ENCODE measurements at regions of chr1 and their contacts with region 1.

Region 1: GRCh38 chr1:12124693-12125421 is 41.9 kb upstream of the TNFRSF1B start:
- DNase-seq: peak; percentile 68 to 85 (median 72)
- H3K4me3 ChIP-seq: no peak overlapping the region
- H3K4me3 Mint-ChIP-seq: peak overlapping the region in 4 of 7 donors; percentile 27 to 50 (median 40)
- H3K27ac ChIP-seq: no peak overlapping the region
- H3K27ac Mint-ChIP-seq: peak overlapping the region in 5 of 8 donors; percentile 59 to 90 (median 81)
- H3K4me1 ChIP-seq: peaks cover 22% of the 10 kb centered on the region
- H3K4me1 Mint-ChIP-seq: peaks cover 30 to 46% (median 34%) of the 10 kb centered on the region in 3 donors
- H3K27me3 ChIP-seq: no peaks in the 10 kb centered on the region
- H3K27me3 Mint-ChIP-seq: peaks cover 0 to 2% of the 10 kb centered on the region in 2 donors

Region 2: DNA sequence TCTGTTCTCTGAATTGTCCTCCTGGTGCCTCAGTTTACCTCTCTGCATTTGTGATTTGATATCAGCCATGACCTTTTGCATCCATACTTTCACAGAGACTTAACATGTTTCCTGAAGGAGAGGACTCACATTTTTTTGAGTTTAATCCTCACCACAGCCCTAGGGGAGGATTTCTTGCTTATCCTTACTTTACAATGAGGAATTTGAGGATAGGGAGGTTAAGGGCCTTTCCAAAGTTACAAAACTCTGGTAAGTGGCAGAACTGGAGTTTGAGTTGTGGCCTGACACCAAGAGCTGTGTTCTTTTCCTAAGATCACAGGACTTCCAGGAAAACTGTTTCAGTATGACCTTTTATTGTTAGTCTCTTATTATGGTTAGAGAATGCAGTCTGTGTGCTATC is 27.5 kb before region 1 on chr1:
- CTCF ChIA-PET with region 1: no interaction called
- POLR2A ChIA-PET with region 1: no interaction called
- DNase-seq: no peak
- H3K4me3 ChIP-seq: no peak overlapping the region
- H3K4me3 Mint-ChIP-seq: no peak overlapping the region
- H3K27ac ChIP-seq: no peak overlapping the region
- H3K27ac Mint-ChIP-seq: no peak overlapping the region
- H3K4me1 ChIP-seq: no peaks in the 10 kb centered on the region
- H3K4me1 Mint-ChIP-seq: peaks cover 5% of the 10 kb centered on the region in 3 donors
- H3K27me3 ChIP-seq: no peaks in the 10 kb centered on the region
- H3K27me3 Mint-ChIP-seq: no peaks in the 10 kb centered on the region

Region 3: DNA sequence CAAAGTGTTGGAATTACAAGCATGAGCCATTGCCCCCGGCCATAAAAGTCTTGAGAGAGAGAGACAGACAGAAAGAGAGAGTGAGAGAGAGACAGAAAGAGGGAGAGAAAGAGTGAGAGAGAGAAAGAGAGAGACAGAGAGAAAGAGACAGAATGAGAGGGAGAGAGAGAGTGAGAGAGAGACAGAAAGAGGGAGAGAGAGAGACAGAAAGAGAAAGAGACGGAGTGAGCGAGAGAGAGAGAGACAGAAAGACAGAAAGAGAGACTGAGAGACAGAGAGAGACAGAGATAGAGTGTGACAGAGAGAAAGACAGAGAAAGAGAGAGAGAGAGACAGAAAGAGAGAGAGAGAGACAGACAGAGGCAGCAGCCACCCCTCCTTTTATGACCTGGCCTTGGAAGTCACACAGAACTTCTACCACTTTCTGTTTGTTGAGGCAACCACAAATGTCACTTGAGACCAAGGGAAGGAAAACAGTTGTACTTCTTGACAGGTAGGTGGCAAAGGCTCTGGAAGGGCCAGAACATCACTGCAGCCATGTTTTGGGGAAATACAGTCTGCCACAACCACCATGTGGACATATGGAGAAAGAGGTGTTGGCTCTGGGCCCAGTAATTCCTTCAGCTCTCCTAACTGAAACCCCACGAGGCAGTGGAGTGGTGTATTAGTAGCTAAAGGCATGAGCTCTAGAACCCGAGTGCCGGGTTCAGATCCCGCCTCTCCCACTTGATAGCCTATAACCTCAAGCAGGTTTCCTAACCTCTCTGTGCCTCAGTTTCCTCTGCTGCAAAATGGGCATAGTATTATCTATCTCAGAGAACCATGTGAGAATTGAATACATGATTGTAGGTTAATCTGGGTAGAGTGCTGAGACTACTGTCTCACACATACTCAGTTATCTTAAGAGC is 11.2 kb before region 1 on chr1:
- CTCF ChIA-PET with region 1: interaction called, 26 read pairs
- POLR2A ChIA-PET with region 1: no interaction called
- DNase-seq: peak in 1 of 5 donors; percentile 11
- H3K4me3 ChIP-seq: no peak overlapping the region
- H3K4me3 Mint-ChIP-seq: no peak overlapping the region
- H3K27ac ChIP-seq: no peak overlapping the region
- H3K27ac Mint-ChIP-seq: peak overlapping the region in 3 of 8 donors; percentile 20 to 51 (median 33)
- H3K4me1 ChIP-seq: peaks cover 6% of the 10 kb centered on the region
- H3K4me1 Mint-ChIP-seq: peaks cover 8 to 10% (median 9%) of the 10 kb centered on the region in 3 donors
- H3K27me3 ChIP-seq: no peaks in the 10 kb centered on the region
- H3K27me3 Mint-ChIP-seq: no peaks in the 10 kb centered on the region

Region 4: GRCh38 chr1:12143631-12144155 is 18.8 kb after region 1 on chr1:
- CTCF ChIA-PET with region 1: interaction called, 41 read pairs
- POLR2A ChIA-PET with region 1: no interaction called
- DNase-seq: no peak
- H3K4me3 ChIP-seq: no peak overlapping the region
- H3K4me3 Mint-ChIP-seq: peak overlapping the region in 5 of 7 donors; percentile 2 to 59 (median 45)
- H3K27ac ChIP-seq: no peak overlapping the region
- H3K27ac Mint-ChIP-seq: peak overlapping the region in 7 of 8 donors; percentile 7 to 91 (median 64)
- H3K4me1 ChIP-seq: peaks cover 46% of the 10 kb centered on the region
- H3K4me1 Mint-ChIP-seq: peaks cover 32 to 50% (median 36%) of the 10 kb centered on the region in 3 donors
- H3K27me3 ChIP-seq: no peaks in the 10 kb centered on the region
- H3K27me3 Mint-ChIP-seq: no peaks in the 10 kb centered on the region

Region 5: GRCh38 chr1:12161662-12162458 is 37.0 kb after region 1 on chr1:
- CTCF ChIA-PET with region 1: interaction called, 23 read pairs
- POLR2A ChIA-PET with region 1: no interaction called
- DNase-seq: peak in 4 of 5 donors; percentile 71 to 91 (median 78)
- H3K4me3 ChIP-seq: peak overlapping the region; percentile 46
- H3K4me3 Mint-ChIP-seq: peak overlapping the region; percentile 72 to 83 (median 76)
- H3K27ac ChIP-seq: peak overlapping the region; percentile 77
- H3K27ac Mint-ChIP-seq: peak overlapping the region; percentile 92 to 98 (median 96)
- H3K4me1 ChIP-seq: peaks cover 73% of the 10 kb centered on the region
- H3K4me1 Mint-ChIP-seq: peaks cover 73 to 87% (median 78%) of the 10 kb centered on the region in 3 donors
- H3K27me3 ChIP-seq: no peaks in the 10 kb centered on the region
- H3K27me3 Mint-ChIP-seq: no peaks in the 10 kb centered on the region

Region 6: DNA sequence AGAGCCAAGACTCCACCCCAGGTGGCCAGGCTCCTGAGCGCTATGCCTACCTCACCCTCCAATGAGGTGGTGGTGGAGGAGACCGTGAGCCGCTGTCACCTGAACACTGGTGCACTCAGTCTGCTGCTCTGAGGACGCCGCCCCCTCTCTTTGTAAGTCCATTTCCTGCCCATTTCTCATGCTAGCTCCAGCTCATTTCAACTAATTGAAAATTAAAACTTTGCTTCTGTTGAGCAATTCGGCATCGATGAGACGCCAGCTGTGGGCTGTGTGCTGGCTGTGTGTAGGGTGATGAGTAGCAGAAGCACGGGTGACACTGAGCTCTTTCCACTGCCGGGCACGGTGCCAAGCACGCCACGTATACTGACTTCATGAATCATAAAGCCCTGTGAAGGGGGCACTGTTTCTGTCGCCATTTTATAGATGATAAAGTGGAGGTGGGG is 53.2 kb after region 1 on chr1:
- CTCF ChIA-PET with region 1: interaction called, 68 read pairs
- POLR2A ChIA-PET with region 1: interaction called, 7 read pairs
- DNase-seq: peak; percentile 85 to 98 (median 90)
- H3K4me3 ChIP-seq: peak overlapping the region; percentile 63
- H3K4me3 Mint-ChIP-seq: peak overlapping the region; percentile 67 to 93 (median 85)
- H3K27ac ChIP-seq: peak overlapping the region; percentile 76
- H3K27ac Mint-ChIP-seq: peak overlapping the region; percentile 97 to 100 (median 100)
- H3K4me1 ChIP-seq: peaks cover 82% of the 10 kb centered on the region
- H3K4me1 Mint-ChIP-seq: peaks cover 81 to 94% (median 84%) of the 10 kb centered on the region in 3 donors
- H3K27me3 ChIP-seq: no peaks in the 10 kb centered on the region
- H3K27me3 Mint-ChIP-seq: peaks cover 0 to 10% of the 10 kb centered on the region in 2 donors

Region 7: GRCh38 chr1:12208764-12209494 is 84.1 kb after region 1 on chr1:
- CTCF ChIA-PET with region 1: interaction called, 348 read pairs
- POLR2A ChIA-PET with region 1: interaction called, 6 read pairs
- DNase-seq: peak; percentile 72 to 87 (median 80)
- H3K4me3 ChIP-seq: no peak overlapping the region
- H3K4me3 Mint-ChIP-seq: peak overlapping the region in 5 of 7 donors; percentile 19 to 70 (median 34)
- H3K27ac ChIP-seq: no peak overlapping the region
- H3K27ac Mint-ChIP-seq: peak overlapping the region; percentile 83 to 98 (median 87)
- H3K4me1 ChIP-seq: peaks cover 46% of the 10 kb centered on the region
- H3K4me1 Mint-ChIP-seq: peaks cover 53 to 67% (median 64%) of the 10 kb centered on the region in 3 donors
- H3K27me3 ChIP-seq: no peaks in the 10 kb centered on the region
- H3K27me3 Mint-ChIP-seq: no peaks in the 10 kb centered on the region

Region 8: GRCh38 chr1:12229835-12230548 is 105.1 kb after region 1 on chr1 and contains the start of gene VPS13D:
- CTCF ChIA-PET with region 1: interaction called, 11 read pairs
- POLR2A ChIA-PET with region 1: no interaction called
- DNase-seq: peak; percentile 77 to 88 (median 80)
- H3K4me3 ChIP-seq: peak within 1 kb of the TSS; percentile 91
- H3K4me3 Mint-ChIP-seq: peak within 1 kb of the TSS; percentile 89 to 95 (median 90)
- H3K27ac ChIP-seq: peak within 1 kb of the TSS; percentile 86
- H3K27ac Mint-ChIP-seq: peak within 1 kb of the TSS; percentile 47 to 92 (median 87)
- H3K4me1 ChIP-seq: peaks cover 21% of the 10 kb centered on the region
- H3K4me1 Mint-ChIP-seq: peaks cover 24 to 34% (median 27%) of the 10 kb centered on the region in 3 donors
- H3K27me3 ChIP-seq: no peaks in the 10 kb centered on the region
- H3K27me3 Mint-ChIP-seq: no peaks in the 10 kb centered on the region
- total RNA-seq, gene VPS13D: 24.1 to 28.5 TPM

Measured in CD8-positive, alpha-beta memory T cell (primary cell).